CD14-positive monocyte (primary cell): ENCODE measurements at regions of chr2 and their contacts with region 1.

Region 1: GRCh38 chr2:136117909-136118818 is at the start of gene CXCR4:
- DNase-seq: peak; percentile 76 to 83 (median 78)
- H3K4me3 ChIP-seq: peak within 1 kb of the TSS; percentile 98 to 99 (median 98)
- H3K4me3 Mint-ChIP-seq: peak within 1 kb of the TSS; percentile 98
- H3K27ac ChIP-seq: peak within 1 kb of the TSS; percentile 95 to 99
- H3K27ac Mint-ChIP-seq: peak within 1 kb of the TSS; percentile 95 to 99 (median 97)
- H3K4me1 ChIP-seq: peaks cover 59 to 66% of the 10 kb centered on the region in 2 donors
- H3K4me1 Mint-ChIP-seq: peaks cover 58% of the 10 kb centered on the region
- H3K27me3 ChIP-seq: no peaks in the 10 kb centered on the region
- H3K27me3 Mint-ChIP-seq: peaks cover 0 to 2% (median 0%) of the 10 kb centered on the region in 3 donors
- CTCF ChIP-seq: peak; percentile 9
- polyA plus RNA-seq, gene CXCR4: 140 to 1,274 (median 391) TPM

Region 2: DNA sequence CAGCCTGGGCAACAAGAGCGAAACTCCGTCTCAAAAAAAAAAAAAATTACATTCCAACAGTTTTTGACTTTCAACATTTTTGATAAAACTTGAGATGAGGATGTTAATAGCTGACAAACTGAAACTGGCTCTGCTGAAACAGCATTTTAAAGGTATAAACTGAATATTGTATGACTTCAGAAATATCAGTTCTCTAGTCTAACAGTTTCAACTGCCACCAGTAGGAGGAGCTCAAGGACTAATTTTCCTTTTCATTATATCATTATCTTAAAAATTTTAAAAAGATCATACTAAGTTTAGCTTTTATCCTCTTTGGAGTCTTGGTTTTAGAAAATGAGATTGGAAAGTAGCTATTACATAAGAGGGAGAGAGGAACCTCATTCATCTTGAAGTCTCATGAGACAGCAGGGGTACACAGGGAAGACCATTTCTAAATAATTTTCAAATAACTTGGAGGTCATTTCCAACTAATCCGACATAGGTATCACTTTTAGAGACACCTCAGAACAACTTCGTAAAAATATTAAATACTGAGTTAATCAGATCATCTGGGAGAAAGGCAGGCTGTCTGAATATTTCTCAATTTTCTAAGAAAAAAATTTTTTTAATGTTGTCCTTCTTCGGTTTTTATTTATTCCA is 204.3 kb before region 1 on chr2:
- intact Hi-C with region 1: loop called (anchors 10 kb)
- DNase-seq: peak; percentile 40 to 70 (median 49)
- H3K4me3 ChIP-seq: no peak overlapping the region
- H3K4me3 Mint-ChIP-seq: no peak overlapping the region
- H3K27ac ChIP-seq: peak overlapping the region in 1 of 2 donors; percentile 63
- H3K27ac Mint-ChIP-seq: peak overlapping the region in 6 of 7 donors; percentile 51 to 83 (median 68)
- H3K4me1 ChIP-seq: peaks cover 4 to 11% of the 10 kb centered on the region in 2 donors
- H3K4me1 Mint-ChIP-seq: peaks cover 5% of the 10 kb centered on the region
- H3K27me3 ChIP-seq: no peaks in the 10 kb centered on the region
- H3K27me3 Mint-ChIP-seq: no peaks in the 10 kb centered on the region
- CTCF ChIP-seq: peak; percentile 94

Region 3: DNA sequence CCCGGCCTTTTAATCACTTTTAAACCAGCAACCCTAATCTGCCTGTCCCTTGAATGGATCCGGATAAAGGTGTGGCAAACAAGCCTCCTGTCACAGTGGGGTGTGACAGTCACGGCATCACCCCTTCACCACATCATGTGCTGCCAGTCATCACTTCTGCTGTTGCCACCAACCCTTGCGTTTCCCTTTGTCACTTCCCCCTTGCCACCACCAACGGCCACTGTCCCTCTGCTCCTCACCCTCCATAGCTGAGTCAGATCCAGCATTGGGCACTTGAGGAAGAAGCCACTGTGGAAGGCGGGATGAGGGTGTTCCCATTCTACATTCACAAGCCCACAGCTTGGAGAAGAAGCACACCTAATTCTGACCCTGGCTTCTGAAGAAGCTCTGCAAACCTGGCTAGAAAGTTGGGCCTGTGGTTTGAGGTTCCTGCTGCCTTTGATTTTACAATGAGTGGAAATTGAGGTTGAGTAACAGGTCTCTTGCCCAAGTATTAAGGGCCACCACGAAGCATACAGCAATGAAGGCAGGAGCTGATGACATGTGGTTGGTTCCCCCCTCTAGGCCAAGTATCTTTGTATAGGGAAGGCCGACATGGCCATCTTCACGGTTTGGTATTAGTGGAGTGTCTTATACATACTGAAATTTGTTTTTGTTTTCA is 109.8 kb before region 1 on chr2:
- intact Hi-C with region 1: loop called (anchors 5 kb)
- DNase-seq: peak; percentile 98 to 99 (median 98)
- H3K4me3 ChIP-seq: peak overlapping the region in 1 of 3 experiments; percentile 14
- H3K4me3 Mint-ChIP-seq: peak overlapping the region; percentile 41 to 46
- H3K27ac ChIP-seq: peak overlapping the region; percentile 94 to 97
- H3K27ac Mint-ChIP-seq: peak overlapping the region; percentile 97 to 99 (median 99)
- H3K4me1 ChIP-seq: peaks cover 79 to 82% of the 10 kb centered on the region in 2 donors
- H3K4me1 Mint-ChIP-seq: peaks cover 75% of the 10 kb centered on the region
- H3K27me3 ChIP-seq: no peaks in the 10 kb centered on the region
- H3K27me3 Mint-ChIP-seq: peaks cover 0 to 2% (median 0%) of the 10 kb centered on the region in 3 donors
- CTCF ChIP-seq: no peak

Region 4: GRCh38 chr2:136059036-136059472 is 59.1 kb before region 1 on chr2:
- intact Hi-C with region 1: loop called in 1 of 2 experiments (anchors 10 kb)
- DNase-seq: peak in 2 of 3 donors; percentile 18 to 23
- H3K4me3 ChIP-seq: no peak overlapping the region
- H3K4me3 Mint-ChIP-seq: no peak overlapping the region
- H3K27ac ChIP-seq: no peak overlapping the region
- H3K27ac Mint-ChIP-seq: peak overlapping the region in 1 of 7 donors; percentile 53
- H3K4me1 ChIP-seq: peaks cover 25 to 27% of the 10 kb centered on the region in 2 donors
- H3K4me1 Mint-ChIP-seq: peaks cover 39% of the 10 kb centered on the region
- H3K27me3 ChIP-seq: no peaks in the 10 kb centered on the region
- H3K27me3 Mint-ChIP-seq: peaks cover 0 to 2% (median 0%) of the 10 kb centered on the region in 3 donors
- CTCF ChIP-seq: no peak

Region 5: GRCh38 chr2:136212423-136213378 is 94.5 kb after region 1 on chr2:
- intact Hi-C with region 1: loop called (anchors 5 kb)
- DNase-seq: peak in 2 of 3 donors; percentile 41 to 42
- H3K4me3 ChIP-seq: no peak overlapping the region
- H3K4me3 Mint-ChIP-seq: no peak overlapping the region
- H3K27ac ChIP-seq: peak overlapping the region in 1 of 2 donors; percentile 96
- H3K27ac Mint-ChIP-seq: peak overlapping the region; percentile 93 to 99 (median 97)
- H3K4me1 ChIP-seq: peaks cover 72 to 91% of the 10 kb centered on the region in 2 donors
- H3K4me1 Mint-ChIP-seq: peaks cover 94% of the 10 kb centered on the region
- H3K27me3 ChIP-seq: no peaks in the 10 kb centered on the region
- H3K27me3 Mint-ChIP-seq: peaks cover 0 to 1% (median 0%) of the 10 kb centered on the region in 3 donors
- CTCF ChIP-seq: no peak

Region 6: DNA sequence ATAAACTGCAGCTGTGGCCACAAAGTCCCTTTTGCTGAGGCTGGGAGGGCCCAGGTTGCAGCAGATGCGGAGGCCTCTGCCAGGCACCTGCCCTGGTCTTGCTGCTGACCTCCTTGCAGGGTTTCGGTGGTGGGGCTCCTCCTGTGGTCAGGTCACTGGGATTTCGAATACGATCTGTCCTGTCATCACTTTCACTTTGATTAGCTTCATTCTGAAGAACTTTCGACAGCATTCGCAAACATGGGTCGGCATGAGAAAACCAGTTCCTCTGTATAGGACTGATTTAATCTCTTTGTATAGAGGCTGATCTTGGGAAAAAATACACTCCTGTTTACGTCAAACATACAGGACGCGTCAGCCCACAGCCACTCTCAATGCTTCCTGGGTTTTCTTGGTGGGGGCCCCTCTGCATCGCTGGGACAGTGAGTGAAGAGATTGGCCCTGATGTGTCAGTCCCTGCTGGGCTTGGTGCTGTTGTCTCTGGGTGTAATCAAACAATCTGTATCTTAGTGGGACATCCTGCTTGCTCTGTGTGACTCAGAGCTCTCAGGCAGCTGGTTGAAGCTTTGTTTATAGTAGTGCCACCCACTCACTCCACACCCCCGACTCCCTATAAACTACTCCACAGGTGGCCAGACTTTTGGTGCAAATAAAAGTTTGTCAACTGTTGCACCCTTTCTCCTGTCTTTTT is 209.1 kb after region 1 on chr2:
- intact Hi-C with region 1: loop called in 1 of 2 experiments (anchors 5 kb)
- DNase-seq: peak in 2 of 3 donors; percentile 38 to 42
- H3K4me3 ChIP-seq: peak overlapping the region in 1 of 3 experiments; percentile 15
- H3K4me3 Mint-ChIP-seq: peak overlapping the region; percentile 53 to 59
- H3K27ac ChIP-seq: peak overlapping the region; percentile 27 to 59
- H3K27ac Mint-ChIP-seq: peak overlapping the region; percentile 43 to 88 (median 68)
- H3K4me1 ChIP-seq: peaks cover 56 to 60% of the 10 kb centered on the region in 2 donors
- H3K4me1 Mint-ChIP-seq: peaks cover 66% of the 10 kb centered on the region
- H3K27me3 ChIP-seq: no peaks in the 10 kb centered on the region
- H3K27me3 Mint-ChIP-seq: peaks cover 0 to 7% (median 0%) of the 10 kb centered on the region in 3 donors
- CTCF ChIP-seq: no peak

Region 7: GRCh38 chr2:136384531-136385303 is 266.6 kb after region 1 on chr2:
- intact Hi-C with region 1: loop called (anchors 5 to 10 kb)
- DNase-seq: peak; percentile 41 to 62 (median 60)
- H3K4me3 ChIP-seq: no peak overlapping the region
- H3K4me3 Mint-ChIP-seq: peak overlapping the region in 1 of 2 donors; percentile 19
- H3K27ac ChIP-seq: no peak overlapping the region
- H3K27ac Mint-ChIP-seq: peak overlapping the region in 5 of 7 donors; percentile 4 to 76 (median 41)
- H3K4me1 ChIP-seq: peaks cover 15 to 17% of the 10 kb centered on the region in 2 donors
- H3K4me1 Mint-ChIP-seq: peaks cover 32% of the 10 kb centered on the region
- H3K27me3 ChIP-seq: no peaks in the 10 kb centered on the region
- H3K27me3 Mint-ChIP-seq: peaks cover 0 to 2% (median 0%) of the 10 kb centered on the region in 3 donors
- CTCF ChIP-seq: peak; percentile 80